CD4-positive, alpha-beta T cell (primary cell): ENCODE measurements at regions of chr7 and their contacts with region 1.

Region 1: DNA sequence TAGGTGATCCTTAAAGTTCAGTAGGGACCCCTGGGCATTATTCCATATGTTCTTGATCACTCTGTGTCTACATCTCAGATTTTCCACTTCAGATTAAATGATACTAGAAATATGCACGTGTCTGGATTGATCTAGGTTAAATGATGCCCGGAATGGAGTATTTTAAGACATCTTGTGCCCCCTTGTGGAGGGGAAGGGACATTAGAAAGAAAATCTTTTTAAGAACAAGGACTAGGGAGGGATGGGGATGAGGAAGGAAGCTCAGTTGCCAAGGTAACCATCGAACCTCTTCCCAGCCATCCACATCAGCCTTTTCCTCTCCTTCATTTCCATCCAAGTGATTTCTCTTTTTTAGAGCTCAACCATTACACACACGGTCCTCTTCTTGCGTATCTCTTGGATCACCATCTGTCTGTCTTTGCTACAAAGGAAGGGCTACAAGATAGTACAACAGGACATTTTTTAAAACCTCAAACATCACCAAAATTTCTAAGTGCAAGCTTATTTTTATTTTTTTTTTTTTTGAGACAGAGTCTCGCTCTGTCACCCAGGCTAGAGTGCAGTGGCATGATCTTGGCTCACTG is 40.5 kb downstream of the PRSS2 start:
- DNase-seq: peak in 4 of 14 experiments; percentile 59 to 87 (median 86)
- ATAC-seq: no peak
- H3K4me3 ChIP-seq: no peak overlapping the region
- H3K4me3 Mint-ChIP-seq: peak overlapping the region; percentile 62
- H3K27ac ChIP-seq: peak overlapping the region; percentile 95 to 99
- H3K27ac Mint-ChIP-seq: peak overlapping the region; percentile 98
- H3K4me1 ChIP-seq: peaks cover 77% of the 10 kb centered on the region
- H3K4me1 Mint-ChIP-seq: peaks cover 99% of the 10 kb centered on the region
- H3K27me3 ChIP-seq: no peaks in the 10 kb centered on the region
- H3K27me3 Mint-ChIP-seq: no peaks in the 10 kb centered on the region
- CTCF ChIP-seq: peak; percentile 78

Region 2: DNA sequence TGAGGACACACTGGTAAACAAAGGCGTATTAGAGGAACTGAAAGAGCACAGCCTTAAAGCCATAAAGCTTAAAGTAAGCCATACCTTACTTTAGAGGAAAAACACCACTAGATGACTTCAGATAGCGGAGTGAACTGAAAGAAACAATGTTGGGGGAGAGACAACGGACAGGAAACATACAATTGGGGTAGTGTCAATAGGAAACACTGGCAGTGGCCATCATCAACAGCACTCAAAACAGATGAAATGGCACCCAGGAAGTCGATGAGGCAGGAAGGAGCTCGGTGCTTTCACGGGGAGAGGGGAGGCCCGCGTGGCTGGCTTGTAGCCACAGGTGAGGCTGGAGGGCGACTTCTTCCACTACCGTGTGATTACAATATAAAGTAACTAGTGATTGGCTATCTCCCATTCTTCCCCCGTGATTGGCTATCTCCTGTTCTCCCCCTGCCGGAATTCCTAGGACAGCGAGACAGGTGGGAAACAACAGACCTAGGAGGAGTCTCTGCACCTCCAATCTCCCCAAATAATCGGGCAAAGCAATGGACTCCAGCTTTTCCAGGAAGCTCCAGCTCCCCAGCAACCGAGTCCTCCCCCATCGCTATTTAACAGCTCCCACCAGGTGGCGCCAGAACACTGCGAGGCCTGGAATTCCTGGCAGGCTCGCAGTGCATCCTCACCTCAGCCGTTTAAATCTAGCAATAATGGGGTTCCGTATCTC is 835.3 kb before region 1 on chr7:
- CTCF ChIA-PET with region 1: no interaction called
- POLR2A ChIA-PET with region 1: interaction called, 5 read pairs
- intact Hi-C with region 1: loop called in 1 of 2 experiments (anchors 10 kb)
- DNase-seq: peak; percentile 26 to 76 (median 54)
- ATAC-seq: peak; percentile 78
- H3K4me3 ChIP-seq: peak overlapping the region; percentile 52
- H3K4me3 Mint-ChIP-seq: peak overlapping the region; percentile 68
- H3K27ac ChIP-seq: no peak overlapping the region
- H3K27ac Mint-ChIP-seq: peak overlapping the region; percentile 20
- H3K4me1 ChIP-seq: peaks cover 11% of the 10 kb centered on the region
- H3K4me1 Mint-ChIP-seq: peaks cover 21% of the 10 kb centered on the region
- H3K27me3 ChIP-seq: no peaks in the 10 kb centered on the region
- H3K27me3 Mint-ChIP-seq: no peaks in the 10 kb centered on the region
- CTCF ChIP-seq: peak; percentile 78

Region 3: GRCh38 chr7:142445019-142445686 is 366.1 kb before region 1 on chr7:
- CTCF ChIA-PET with region 1: no interaction called
- POLR2A ChIA-PET with region 1: interaction called, 6 read pairs
- intact Hi-C with region 1: loop called (anchors 2 to 5 kb)
- DNase-seq: peak; percentile 17 to 69 (median 35)
- ATAC-seq: peak; percentile 72
- H3K4me3 ChIP-seq: no peak overlapping the region
- H3K4me3 Mint-ChIP-seq: no peak overlapping the region
- H3K27ac ChIP-seq: no peak overlapping the region
- H3K27ac Mint-ChIP-seq: peak overlapping the region; percentile 71
- H3K4me1 ChIP-seq: peaks cover 30% of the 10 kb centered on the region
- H3K4me1 Mint-ChIP-seq: peaks cover 39% of the 10 kb centered on the region
- H3K27me3 ChIP-seq: no peaks in the 10 kb centered on the region
- H3K27me3 Mint-ChIP-seq: no peaks in the 10 kb centered on the region
- CTCF ChIP-seq: no peak

Region 4: DNA sequence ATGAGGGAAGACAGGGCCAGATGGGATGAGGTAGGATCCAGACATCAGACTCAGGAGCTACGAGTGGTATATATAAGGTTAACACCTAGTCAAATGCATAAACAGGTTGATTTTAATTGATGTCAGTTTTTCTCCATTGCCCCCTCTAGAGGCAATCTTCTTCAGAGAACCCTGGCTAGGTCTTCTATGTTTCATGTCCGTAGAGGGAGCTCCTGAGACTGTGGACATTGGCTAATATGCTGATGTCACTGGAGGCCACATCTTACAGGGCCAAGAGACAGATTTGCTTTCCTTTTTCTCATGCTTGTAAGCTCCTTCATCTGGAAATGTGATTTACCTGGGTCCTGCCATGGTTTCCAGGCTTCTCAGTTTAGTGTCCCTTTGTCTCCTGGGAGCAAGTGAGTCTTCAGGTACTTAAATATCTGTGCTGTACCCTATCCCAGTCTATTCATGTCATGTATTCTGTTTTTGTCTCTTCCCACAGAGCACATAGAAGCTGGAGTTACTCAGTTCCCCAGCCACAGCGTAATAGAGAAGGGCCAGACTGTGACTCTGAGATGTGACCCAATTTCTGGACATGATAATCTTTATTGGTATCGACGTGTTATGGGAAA is 223.6 kb before region 1 on chr7:
- CTCF ChIA-PET with region 1: no interaction called
- POLR2A ChIA-PET with region 1: interaction called, 19 read pairs
- intact Hi-C with region 1: no loop called
- DNase-seq: peak in 3 of 14 experiments; percentile 53 to 74 (median 68)
- ATAC-seq: peak; percentile 89
- H3K4me3 ChIP-seq: peak overlapping the region; percentile 15
- H3K4me3 Mint-ChIP-seq: peak overlapping the region; percentile 48
- H3K27ac ChIP-seq: no peak overlapping the region
- H3K27ac Mint-ChIP-seq: peak overlapping the region; percentile 67
- H3K4me1 ChIP-seq: peaks cover 2% of the 10 kb centered on the region
- H3K4me1 Mint-ChIP-seq: peaks cover 8% of the 10 kb centered on the region
- H3K27me3 ChIP-seq: no peaks in the 10 kb centered on the region
- H3K27me3 Mint-ChIP-seq: no peaks in the 10 kb centered on the region
- CTCF ChIP-seq: peak; percentile 57

Region 5: GRCh38 chr7:142669074-142669654 is 142.1 kb before region 1 on chr7:
- CTCF ChIA-PET with region 1: interaction called, 9 read pairs
- POLR2A ChIA-PET with region 1: interaction called, 9 read pairs
- intact Hi-C with region 1: loop called in 1 of 2 experiments (anchors 1 kb)
- DNase-seq: peak in 3 of 14 experiments; percentile 40 to 52 (median 51)
- ATAC-seq: no peak
- H3K4me3 ChIP-seq: no peak overlapping the region
- H3K4me3 Mint-ChIP-seq: no peak overlapping the region
- H3K27ac ChIP-seq: no peak overlapping the region
- H3K27ac Mint-ChIP-seq: peak overlapping the region; percentile 84
- H3K4me1 ChIP-seq: peaks cover 9% of the 10 kb centered on the region
- H3K4me1 Mint-ChIP-seq: peaks cover 35% of the 10 kb centered on the region
- H3K27me3 ChIP-seq: no peaks in the 10 kb centered on the region
- H3K27me3 Mint-ChIP-seq: no peaks in the 10 kb centered on the region
- CTCF ChIP-seq: peak; percentile 43

Region 6: DNA sequence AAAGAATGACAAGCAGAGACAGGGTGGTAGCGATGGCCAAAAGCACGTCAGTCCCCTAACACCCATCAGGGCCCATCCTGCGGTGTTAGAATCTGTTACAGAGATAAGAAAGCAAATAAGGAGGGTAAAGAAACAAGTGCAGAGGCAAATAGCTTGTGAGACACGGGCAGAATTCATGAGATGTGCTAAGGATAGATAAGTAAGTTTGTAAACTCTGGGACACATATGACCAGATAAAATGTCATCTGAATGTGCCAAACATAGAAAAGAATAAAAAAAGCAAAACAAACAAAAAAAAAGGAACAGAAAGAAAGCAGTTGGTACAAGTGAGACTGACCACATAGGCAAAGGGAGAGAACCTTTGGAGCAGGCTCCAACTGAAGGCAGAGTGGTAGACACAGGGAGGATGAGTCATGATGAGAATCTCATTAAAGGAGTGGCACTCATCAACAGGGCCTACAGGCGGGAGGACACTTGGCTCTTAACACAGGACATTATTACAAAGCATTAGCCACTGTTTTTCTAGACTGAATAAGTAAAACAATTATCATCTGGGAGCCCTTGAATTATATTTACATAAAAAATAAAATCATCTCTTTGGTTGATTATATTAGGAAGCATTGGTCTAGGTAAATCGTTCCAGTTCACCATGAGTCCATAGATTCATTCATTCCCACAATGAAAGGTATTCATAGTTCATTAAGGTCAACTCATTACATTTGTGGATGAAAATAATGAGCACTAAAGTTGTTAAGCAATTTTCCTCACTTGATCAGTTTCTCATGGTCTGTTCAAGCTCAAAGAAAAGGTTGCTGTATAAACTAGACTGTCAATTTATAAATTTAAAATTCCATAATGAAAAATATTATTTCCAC is 22.2 kb after region 1 on chr7:
- CTCF ChIA-PET with region 1: interaction called, 8 read pairs
- POLR2A ChIA-PET with region 1: interaction called, 30 read pairs
- intact Hi-C with region 1: loop called in 1 of 2 experiments (anchors 2 kb)
- DNase-seq: no peak
- ATAC-seq: no peak
- H3K4me3 ChIP-seq: no peak overlapping the region
- H3K4me3 Mint-ChIP-seq: no peak overlapping the region
- H3K27ac ChIP-seq: no peak overlapping the region
- H3K27ac Mint-ChIP-seq: no peak overlapping the region
- H3K4me1 ChIP-seq: no peaks in the 10 kb centered on the region
- H3K4me1 Mint-ChIP-seq: peaks cover 18% of the 10 kb centered on the region
- H3K27me3 ChIP-seq: no peaks in the 10 kb centered on the region
- H3K27me3 Mint-ChIP-seq: no peaks in the 10 kb centered on the region
- CTCF ChIP-seq: no peak

Region 7: DNA sequence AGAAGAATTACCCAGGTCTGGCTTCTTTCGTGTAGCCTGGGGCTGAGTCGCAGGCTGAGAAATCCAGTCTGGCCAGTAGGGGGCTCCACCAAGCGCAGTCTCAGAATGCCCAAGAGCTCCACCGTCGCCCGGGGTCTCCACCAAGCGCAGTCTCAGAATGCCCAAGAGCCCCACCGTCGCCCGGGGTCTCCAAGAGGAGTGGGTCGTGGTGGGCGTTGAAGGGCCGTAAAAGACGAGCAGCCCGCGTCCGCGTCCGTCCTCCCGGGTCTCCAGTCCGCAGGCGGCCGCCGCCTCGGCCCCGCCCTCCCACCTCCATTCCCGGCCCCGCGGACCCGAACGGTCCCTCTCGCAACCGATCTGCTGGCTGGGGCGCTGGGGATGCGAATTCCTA is 569.0 kb after region 1 on chr7:
- CTCF ChIA-PET with region 1: interaction called, 12 read pairs
- POLR2A ChIA-PET with region 1: interaction called, 15 read pairs
- intact Hi-C with region 1: loop called in 1 of 2 experiments (anchors 5 kb)
- DNase-seq: peak; percentile 79 to 95 (median 88)
- ATAC-seq: peak; percentile 58
- H3K4me3 ChIP-seq: peak overlapping the region; percentile 87
- H3K4me3 Mint-ChIP-seq: peak overlapping the region; percentile 95
- H3K27ac ChIP-seq: peak overlapping the region; percentile 91 to 97
- H3K27ac Mint-ChIP-seq: peak overlapping the region; percentile 98
- H3K4me1 ChIP-seq: peaks cover 77% of the 10 kb centered on the region
- H3K4me1 Mint-ChIP-seq: peaks cover 42% of the 10 kb centered on the region
- H3K27me3 ChIP-seq: no peaks in the 10 kb centered on the region
- H3K27me3 Mint-ChIP-seq: no peaks in the 10 kb centered on the region
- CTCF ChIP-seq: peak; percentile 79